Activated naive CD4-positive, alpha-beta T cell treated with anti-CD3 and anti-CD28 coated beads for 36 hours (primary cell): ENCODE measurements at regions of chr5 and their contacts with region 1.

Region 1: GRCh38 chr5:81006947-81007636 is 46.9 kb downstream of the RASGRF2 start:
- DNase-seq: peak; percentile 81
- H3K4me3 Mint-ChIP-seq: peak overlapping the region; percentile 89
- H3K27ac Mint-ChIP-seq: peak overlapping the region; percentile 99
- H3K4me1 Mint-ChIP-seq: peaks cover 78% of the 10 kb centered on the region
- H3K27me3 Mint-ChIP-seq: no peaks in the 10 kb centered on the region

Region 2: DNA sequence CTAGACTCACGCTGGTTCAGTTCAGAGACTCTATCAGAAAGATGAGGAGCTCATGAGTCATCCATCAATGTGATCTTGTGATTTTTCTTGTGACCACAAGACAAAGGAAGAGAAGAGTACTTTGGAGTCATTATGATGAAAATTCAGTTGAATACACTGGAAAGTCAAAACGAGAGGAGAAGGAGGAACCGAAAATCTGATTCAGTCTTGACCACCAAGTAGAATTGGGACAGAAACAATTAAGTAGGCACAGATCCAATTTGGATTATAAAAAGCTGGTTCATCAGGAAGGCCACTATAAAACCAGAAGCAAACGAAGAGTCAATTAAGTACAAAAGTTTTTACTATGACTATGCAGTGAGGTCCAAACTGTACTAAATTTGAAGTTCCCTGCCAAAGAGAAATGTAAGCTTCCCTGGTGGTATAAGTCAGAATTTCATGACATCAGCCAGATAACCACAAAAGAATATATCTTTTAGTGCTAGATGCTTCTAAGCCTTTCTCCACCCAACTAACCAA is 881.1 kb before region 1 on chr5:
- CTCF ChIA-PET with region 1: no interaction called
- intact Hi-C with region 1: loop called (anchors 10 kb)
- DNase-seq: peak; percentile 44
- H3K4me3 Mint-ChIP-seq: no peak overlapping the region
- H3K27ac Mint-ChIP-seq: peak overlapping the region; percentile 43
- H3K4me1 Mint-ChIP-seq: peaks cover 47% of the 10 kb centered on the region
- H3K27me3 Mint-ChIP-seq: no peaks in the 10 kb centered on the region

Region 3: GRCh38 chr5:80324912-80325311 is 682.2 kb before region 1 on chr5:
- CTCF ChIA-PET with region 1: no interaction called
- intact Hi-C with region 1: no loop called
- DNase-seq: no peak
- H3K4me3 Mint-ChIP-seq: no peak overlapping the region
- H3K27ac Mint-ChIP-seq: no peak overlapping the region
- H3K4me1 Mint-ChIP-seq: no peaks in the 10 kb centered on the region
- H3K27me3 Mint-ChIP-seq: no peaks in the 10 kb centered on the region

Region 4: DNA sequence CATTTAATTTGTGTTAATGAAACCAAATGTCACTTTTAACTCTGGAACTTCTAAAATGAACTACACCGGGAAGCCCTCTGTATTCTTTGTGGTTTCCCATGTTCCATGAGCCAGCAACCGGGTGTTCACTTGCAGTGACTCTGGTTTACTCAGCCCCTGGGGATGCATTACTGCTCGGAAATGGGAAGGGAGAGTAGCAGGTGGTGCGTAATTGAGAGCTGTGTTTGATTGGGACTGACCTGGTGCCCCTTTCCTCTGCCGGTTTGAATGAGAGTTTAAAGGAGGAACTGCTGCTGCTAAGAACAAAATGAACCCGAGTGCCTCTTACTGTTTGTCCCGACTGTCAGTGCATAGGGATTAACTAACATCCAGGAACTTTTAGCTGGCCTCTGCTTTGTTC is 252.2 kb before region 1 on chr5:
- CTCF ChIA-PET with region 1: no interaction called
- intact Hi-C with region 1: loop called (anchors 1 kb)
- DNase-seq: peak; percentile 81
- H3K4me3 Mint-ChIP-seq: peak overlapping the region; percentile 32
- H3K27ac Mint-ChIP-seq: peak overlapping the region; percentile 43
- H3K4me1 Mint-ChIP-seq: peaks cover 54% of the 10 kb centered on the region
- H3K27me3 Mint-ChIP-seq: no peaks in the 10 kb centered on the region

Region 5: GRCh38 chr5:80985600-80986228 is 21.4 kb before region 1 on chr5:
- CTCF ChIA-PET with region 1: interaction called, 4 read pairs
- intact Hi-C with region 1: loop called (anchors 1 kb)
- DNase-seq: no peak
- H3K4me3 Mint-ChIP-seq: peak overlapping the region; percentile 11
- H3K27ac Mint-ChIP-seq: peak overlapping the region; percentile 62
- H3K4me1 Mint-ChIP-seq: peaks cover 69% of the 10 kb centered on the region
- H3K27me3 Mint-ChIP-seq: no peaks in the 10 kb centered on the region

Region 6: DNA sequence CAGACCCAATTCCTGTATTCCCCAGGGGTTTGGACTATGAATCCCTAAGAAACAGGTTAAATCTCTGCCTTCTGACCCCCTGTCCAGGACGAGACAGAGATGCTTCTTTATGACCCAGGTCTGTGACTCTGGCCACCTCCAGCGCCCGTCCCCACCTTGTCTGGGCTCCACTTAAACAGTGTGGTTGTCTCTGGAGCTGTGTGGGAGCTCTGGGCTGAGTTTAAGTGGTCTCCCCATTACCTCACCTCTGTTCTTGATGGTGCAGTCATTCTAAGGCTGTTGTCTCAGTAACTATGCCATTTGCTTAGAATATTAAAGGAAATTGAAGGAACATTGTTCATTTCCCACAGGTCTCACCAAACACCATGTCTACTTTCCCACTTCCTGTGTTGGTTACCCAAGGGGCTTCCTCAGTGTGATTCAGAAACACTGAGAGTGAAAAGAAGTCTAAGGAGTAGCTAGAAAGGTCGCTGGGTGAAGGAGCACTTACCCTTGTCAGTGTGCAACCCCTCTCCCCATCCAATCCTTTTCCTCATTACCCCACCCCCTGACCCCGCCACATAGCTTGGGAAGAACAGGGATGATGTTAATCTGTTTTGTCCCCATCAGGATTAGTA is 98.3 kb after region 1 on chr5:
- CTCF ChIA-PET with region 1: interaction called, 4 read pairs
- intact Hi-C with region 1: loop called (anchors 1 kb)
- DNase-seq: no peak
- H3K4me3 Mint-ChIP-seq: no peak overlapping the region
- H3K27ac Mint-ChIP-seq: peak overlapping the region; percentile 5
- H3K4me1 Mint-ChIP-seq: peaks cover 25% of the 10 kb centered on the region
- H3K27me3 Mint-ChIP-seq: no peaks in the 10 kb centered on the region